Gastrocnemius medialis (tissue), 4 donors: ENCODE measurements at regions of chr16 and their contacts with region 1.

Region 1: GRCh38 chr16:82631701-82632685 is 5.2 kb downstream of the CDH13 start:
- DNase-seq: peak; percentile 82 to 90
- ATAC-seq: peak; percentile 68 to 83
- H3K4me3 ChIP-seq: no peak overlapping the region
- H3K27ac ChIP-seq: peak overlapping the region; percentile 86 to 93 (median 88)
- H3K4me1 ChIP-seq: peaks cover 74 to 79% of the 10 kb centered on the region in 2 donors
- H3K27me3 ChIP-seq: no peaks in the 10 kb centered on the region
- CTCF ChIP-seq: peak in 3 of 5 experiments; percentile 13 to 45 (median 16)
- POLR2A ChIP-seq: no peak

Region 2: GRCh38 chr16:82585675-82586074 is 46.3 kb before region 1 on chr16:
- in situ Hi-C with region 1: no loop called
- intact Hi-C with region 1: loop called (anchors 2 kb)
- DNase-seq: no peak
- ATAC-seq: no peak
- H3K4me3 ChIP-seq: no peak overlapping the region
- H3K27ac ChIP-seq: peak overlapping the region in 3 of 4 donors; percentile 76 to 89 (median 84)
- H3K4me1 ChIP-seq: peaks cover 5 to 20% of the 10 kb centered on the region in 2 donors
- H3K27me3 ChIP-seq: no peaks in the 10 kb centered on the region
- CTCF ChIP-seq: no peak
- POLR2A ChIP-seq: no peak